ENCODE measurements at regions of chr17 and their contacts with region 1.

Region 1: DNA sequence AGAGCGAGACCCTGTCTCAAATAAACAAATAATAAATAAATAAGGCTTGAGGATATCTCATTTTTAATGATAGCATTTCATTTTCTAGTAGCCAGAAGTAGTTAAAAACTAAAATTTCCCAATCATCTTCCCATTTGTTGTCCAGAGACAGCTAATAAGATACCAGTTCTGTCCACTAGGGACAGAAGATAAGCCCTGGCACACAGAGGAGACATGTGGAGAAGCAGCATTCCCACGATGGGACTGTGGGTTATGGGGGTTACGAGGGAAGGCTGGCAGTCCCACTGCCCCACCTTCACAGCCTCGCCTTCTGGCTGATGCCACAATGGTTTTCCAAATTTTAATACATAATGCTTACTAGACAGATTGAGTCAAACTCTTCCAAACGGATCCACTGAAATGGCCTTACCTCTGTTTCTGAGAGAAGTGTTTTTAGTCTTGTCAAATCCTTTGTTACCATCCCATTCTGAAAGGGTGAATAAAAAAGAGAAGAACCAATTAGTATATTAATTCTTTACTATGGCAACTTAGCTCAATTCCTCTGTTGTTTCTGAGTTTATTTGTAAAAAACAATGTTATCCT is 44.2 kb downstream of the HELZ start:
- DNase-seq: no peak
- H3K4me3 ChIP-seq: no peak overlapping the region
- H3K27ac ChIP-seq: no peak overlapping the region
- H3K4me1 ChIP-seq: no peaks in the 10 kb centered on the region
- H3K27me3 ChIP-seq: no peaks in the 10 kb centered on the region
- CTCF ChIP-seq: peak in 1 of 2 experiments; percentile 14

Region 2: GRCh38 chr17:65374966-65375365 is 1825.8 kb before region 1 on chr17:
- intact Hi-C with region 1: loop called (anchors 5 kb)
- DNase-seq: no peak
- H3K4me3 ChIP-seq: no peak overlapping the region
- H3K27ac ChIP-seq: no peak overlapping the region
- H3K4me1 ChIP-seq: no peaks in the 10 kb centered on the region
- H3K27me3 ChIP-seq: peaks cover 0 to 21% of the 10 kb centered on the region in 2 donors
- CTCF ChIP-seq: no peak